BJ (cell line): ENCODE measurements at regions of chr1 and their contacts with region 1.

Region 1: DNA sequence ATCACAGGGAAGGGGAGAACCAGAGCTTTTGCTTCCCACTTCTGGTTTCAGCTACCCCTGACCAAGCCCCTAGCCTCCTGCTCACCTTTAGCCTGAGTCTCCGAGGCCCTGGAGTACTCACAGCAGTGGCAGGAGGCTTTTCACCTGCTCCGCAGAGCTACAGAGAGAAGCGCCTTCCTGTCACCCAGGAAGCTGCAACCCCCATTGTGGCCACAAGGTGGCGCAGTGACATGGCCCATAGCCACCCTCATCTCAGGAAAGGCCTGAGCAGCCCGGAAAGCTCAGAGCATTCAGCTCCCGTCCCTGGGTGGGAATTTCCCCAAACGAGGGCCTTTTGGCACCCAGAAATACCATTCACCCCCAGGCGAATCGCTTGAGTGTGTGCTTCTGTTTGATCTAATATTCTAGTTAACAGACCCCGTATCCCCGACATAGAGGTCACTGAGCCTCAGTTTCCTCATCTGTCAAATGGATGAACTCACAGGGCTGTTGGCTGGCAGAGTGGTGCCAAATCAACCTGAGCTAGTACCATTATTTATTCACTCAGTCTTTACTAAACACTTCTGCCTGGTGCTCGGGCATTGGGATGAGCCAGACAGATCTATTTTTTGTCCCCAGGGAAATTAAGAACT is 25.3 kb downstream of the A3GALT2 start:
- DNase-seq: no peak
- H3K4me3 ChIP-seq: no peak overlapping the region
- H3K27me3 ChIP-seq: no peaks in the 10 kb centered on the region
- CTCF ChIP-seq: peak; percentile 92

Region 2: GRCh38 chr1:33249055-33249821 is 46.3 kb before region 1 on chr1:
- CTCF ChIA-PET with region 1: no interaction called
- POLR2A ChIA-PET with region 1: no interaction called
- DNase-seq: no peak
- H3K4me3 ChIP-seq: no peak overlapping the region
- H3K27me3 ChIP-seq: peaks cover 2% of the 10 kb centered on the region; the same call in 1 of the 2 replicates
- CTCF ChIP-seq: no peak

Region 3: GRCh38 chr1:33277488-33278084 is 18.0 kb before region 1 on chr1:
- CTCF ChIA-PET with region 1: interaction called, 17 read pairs
- POLR2A ChIA-PET with region 1: no interaction called
- DNase-seq: no peak
- H3K4me3 ChIP-seq: no peak overlapping the region
- H3K27me3 ChIP-seq: no peaks in the 10 kb centered on the region
- CTCF ChIP-seq: no peak

Region 4: GRCh38 chr1:33312413-33312749 is 16.8 kb after region 1 on chr1:
- CTCF ChIA-PET with region 1: interaction called, 28 read pairs
- POLR2A ChIA-PET with region 1: interaction called, 3 read pairs
- DNase-seq: no peak
- H3K4me3 ChIP-seq: no peak overlapping the region
- H3K27me3 ChIP-seq: no peaks in the 10 kb centered on the region; the same call in 1 of the 2 replicates
- CTCF ChIP-seq: no peak

Region 5: GRCh38 chr1:33443080-33443704 is 147.6 kb after region 1 on chr1:
- CTCF ChIA-PET with region 1: interaction called, 10 read pairs
- POLR2A ChIA-PET with region 1: no interaction called
- DNase-seq: no peak
- H3K4me3 ChIP-seq: no peak overlapping the region
- H3K27me3 ChIP-seq: 0 out of 2 replicates have a peak, but pooled peaks cover 1% of the 10 kb centered on the region
- CTCF ChIP-seq: no peak

Region 6: GRCh38 chr1:33472349-33472980 is 176.9 kb after region 1 on chr1 and contains the start of gene ZSCAN20:
- CTCF ChIA-PET with region 1: interaction called, 104 read pairs
- POLR2A ChIA-PET with region 1: no interaction called
- DNase-seq: peak; percentile 94
- H3K4me3 ChIP-seq: peak within 1 kb of the TSS; percentile 66
- H3K27me3 ChIP-seq: no peaks in the 10 kb centered on the region
- CTCF ChIP-seq: no peak
- polyA plus RNA-seq, gene ZSCAN20: 2.9 and 3.4 TPM in 2 replicates